Left ventricle myocardium inferior (tissue), 1 donor: ENCODE measurements at regions of chr10 and their contacts with region 1.

Region 1: GRCh38 chr10:615583-616152 is 73.8 kb downstream of the DIP2C start:
- DNase-seq: no peak
- H3K4me3 ChIP-seq: no peak overlapping the region
- H3K27ac ChIP-seq: no peak overlapping the region
- H3K4me1 ChIP-seq: peaks cover 84% of the 10 kb centered on the region
- H3K27me3 ChIP-seq: no peaks in the 10 kb centered on the region
- CTCF ChIP-seq: no peak

Region 2: GRCh38 chr10:538895-539294 is 76.8 kb before region 1 on chr10:
- intact Hi-C with region 1: no loop called
- DNase-seq: no peak
- H3K4me3 ChIP-seq: no peak overlapping the region
- H3K27ac ChIP-seq: no peak overlapping the region
- H3K4me1 ChIP-seq: peaks cover 30% of the 10 kb centered on the region
- H3K27me3 ChIP-seq: no peaks in the 10 kb centered on the region
- CTCF ChIP-seq: no peak

Region 3: DNA sequence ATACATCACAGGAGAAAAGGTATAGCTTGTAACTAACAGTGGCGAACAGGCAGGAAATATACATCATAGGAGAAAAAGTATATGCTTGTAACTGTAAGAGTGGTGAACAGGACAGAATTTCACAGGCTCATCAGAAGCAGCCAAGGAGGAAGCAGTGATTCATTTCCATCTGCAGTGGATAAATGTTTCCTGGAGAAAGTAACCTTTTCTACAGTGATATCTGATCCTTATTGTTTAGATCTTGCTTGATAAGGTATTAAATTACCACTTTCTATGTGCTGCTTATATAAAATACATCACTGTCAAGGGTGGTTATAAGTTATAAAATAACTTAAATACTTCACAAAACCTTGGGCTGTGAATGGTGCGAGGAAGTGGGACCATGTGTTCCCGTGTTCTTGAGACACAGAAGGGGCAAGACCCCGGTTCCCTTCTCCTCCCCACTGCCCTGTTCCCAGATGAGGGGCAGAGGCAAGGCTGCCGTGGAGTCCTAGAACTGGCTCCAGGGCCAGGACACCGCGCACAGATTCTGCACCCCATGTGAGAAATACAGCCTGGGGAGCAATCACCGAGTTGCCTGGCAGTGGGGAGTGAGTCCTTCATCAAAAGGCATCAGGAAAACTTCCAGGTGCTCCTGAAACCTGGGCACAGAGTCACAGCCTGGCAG is 61.4 kb before region 1 on chr10:
- intact Hi-C with region 1: no loop called
- DNase-seq: no peak
- H3K4me3 ChIP-seq: no peak overlapping the region
- H3K27ac ChIP-seq: no peak overlapping the region
- H3K4me1 ChIP-seq: peaks cover 54% of the 10 kb centered on the region
- H3K27me3 ChIP-seq: no peaks in the 10 kb centered on the region
- CTCF ChIP-seq: no peak

Region 4: DNA sequence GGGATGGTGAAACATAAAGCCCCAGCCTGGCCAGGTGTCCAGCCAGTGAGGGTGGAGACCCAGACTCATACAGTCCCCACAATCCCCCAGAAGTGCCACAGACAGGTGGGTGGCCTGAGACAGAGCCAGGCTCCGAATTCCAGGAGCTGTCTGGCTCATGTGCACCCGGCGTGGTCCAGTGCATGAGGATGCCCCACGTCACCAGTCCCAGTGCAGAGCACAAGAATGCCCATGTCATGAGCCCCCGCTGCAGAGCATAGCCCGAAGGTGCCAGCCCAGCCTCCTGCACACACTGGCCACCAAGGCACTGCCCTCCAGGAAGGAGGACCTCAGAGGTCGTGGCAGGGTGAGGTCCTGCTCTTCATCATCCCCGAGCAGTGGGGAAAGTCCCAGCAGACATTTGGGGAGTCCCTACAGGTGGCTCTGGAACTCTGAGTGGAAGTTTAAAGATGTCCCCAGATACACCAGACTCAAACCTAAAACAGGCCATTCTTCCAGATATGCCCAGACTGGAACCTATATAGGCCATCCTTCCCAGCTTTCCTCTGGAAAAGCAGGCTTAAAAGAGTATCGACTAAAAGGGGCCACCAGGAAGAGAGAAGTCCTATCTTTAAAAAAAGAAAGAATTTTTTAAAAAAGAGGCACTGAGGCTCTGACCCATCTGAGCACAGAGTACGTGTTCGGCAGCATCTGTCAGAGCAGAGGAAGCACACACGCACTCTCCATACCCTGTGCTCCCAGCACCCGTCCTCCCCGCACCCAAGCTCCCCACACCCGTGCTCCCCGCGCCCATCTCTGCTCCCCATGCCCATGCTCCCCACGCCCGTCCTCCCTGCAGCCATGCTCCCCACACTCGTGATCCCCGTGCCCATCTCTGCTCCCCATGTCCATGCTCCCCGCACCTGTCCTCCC is 62.3 kb after region 1 on chr10:
- intact Hi-C with region 1: loop called (anchors 10 kb)
- DNase-seq: no peak
- H3K4me3 ChIP-seq: no peak overlapping the region
- H3K27ac ChIP-seq: peak overlapping the region; percentile 2
- H3K4me1 ChIP-seq: peaks cover 67% of the 10 kb centered on the region
- H3K27me3 ChIP-seq: no peaks in the 10 kb centered on the region
- CTCF ChIP-seq: no peak